ENCODE measurements at regions of chr12 and their contacts with region 1.

Region 1: DNA sequence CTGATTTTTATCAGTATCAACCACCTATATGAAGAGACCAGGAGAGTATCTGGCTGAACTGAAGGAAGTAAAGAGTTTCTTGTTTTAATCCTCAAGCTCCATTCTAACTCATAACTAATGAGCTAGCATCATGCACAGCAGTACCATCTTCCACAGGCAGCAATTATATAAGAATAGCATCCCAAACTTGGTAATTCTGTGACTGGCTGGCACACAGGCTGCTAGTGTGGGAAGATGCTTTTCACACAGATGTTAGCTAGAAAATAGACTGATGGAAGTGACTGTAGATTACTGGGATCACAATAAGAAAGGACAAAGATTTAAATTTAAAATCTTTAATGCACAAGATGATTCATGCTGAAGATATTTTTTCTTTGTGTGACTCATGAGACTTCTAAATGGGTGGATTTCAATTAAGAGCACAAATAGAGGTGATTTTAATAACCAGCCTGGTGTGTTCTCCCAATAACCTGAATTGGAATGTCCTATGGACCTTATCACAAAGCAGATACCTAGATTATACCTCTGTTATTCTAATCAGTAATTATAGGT is 417.7 kb upstream of the ATXN7L3B start:
- DNase-seq: peak; percentile 11
- H3K4me3 ChIP-seq: no peak overlapping the region
- H3K27ac ChIP-seq: no peak overlapping the region
- H3K4me1 ChIP-seq: peaks cover 9% of the 10 kb centered on the region
- H3K27me3 ChIP-seq: no peaks in the 10 kb centered on the region
- CTCF ChIP-seq: no peak

Region 2: GRCh38 chr12:73210548-73211204 is 909.2 kb before region 1 on chr12:
- CTCF ChIA-PET with region 1: no interaction called
- dilution Hi-C with region 1: no loop called
- in situ Hi-C with region 1: no loop called
- intact Hi-C with region 1: loop called (anchors 10 kb)
- DNase-seq: no peak
- H3K4me3 ChIP-seq: no peak overlapping the region
- H3K27ac ChIP-seq: no peak overlapping the region
- H3K4me1 ChIP-seq: no peaks in the 10 kb centered on the region
- H3K27me3 ChIP-seq: no peaks in the 10 kb centered on the region
- CTCF ChIP-seq: no peak

Measured in mammary epithelial cell (primary cell).